ENCODE measurements at regions of chr16 and their contacts with region 1.

Region 1: DNA sequence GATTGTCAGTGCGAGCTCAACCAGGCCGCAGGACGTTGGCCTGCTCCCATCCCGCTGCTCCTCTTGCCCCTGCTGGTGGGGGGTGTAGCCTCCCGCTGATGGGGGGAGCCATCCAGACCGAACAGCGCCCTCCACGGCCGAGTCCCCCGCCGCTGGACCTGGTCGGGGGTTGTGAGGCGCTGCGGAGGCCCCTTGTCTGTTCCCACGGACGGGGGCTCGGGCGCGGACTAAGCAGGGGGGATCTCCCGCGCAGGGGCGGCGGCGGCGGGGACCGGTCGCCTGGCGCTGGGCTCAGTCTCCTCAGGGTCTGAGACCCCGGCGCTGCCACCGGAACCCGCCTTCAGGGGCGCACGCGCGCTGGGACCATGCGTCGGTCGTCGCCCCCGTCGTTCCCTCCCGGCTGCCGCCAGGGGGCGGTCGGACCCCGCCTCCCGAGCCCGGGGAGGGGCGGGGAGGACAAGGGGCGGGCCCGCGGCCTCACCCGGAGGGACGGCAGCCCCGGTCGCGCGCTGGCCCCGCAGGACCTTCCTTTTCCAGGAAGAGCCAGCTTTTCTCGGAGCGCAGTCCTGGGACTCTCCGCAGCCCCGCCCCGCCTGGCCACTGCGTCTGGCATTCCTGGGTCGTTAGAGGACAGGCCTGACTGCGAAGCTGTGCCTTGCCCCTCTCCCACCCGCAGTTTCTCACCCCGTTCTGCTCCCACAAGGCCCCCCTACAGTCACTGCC is 6.3 kb upstream of the IL32 start:
- H3K4me3 ChIP-seq: peak overlapping the region; percentile 87
- H3K27ac ChIP-seq: peak overlapping the region; percentile 77; the same call in 1 of the 2 replicates
- H3K4me1 ChIP-seq: peaks cover 3% of the 10 kb centered on the region
- CTCF ChIP-seq: peak; percentile 99

Region 2: DNA sequence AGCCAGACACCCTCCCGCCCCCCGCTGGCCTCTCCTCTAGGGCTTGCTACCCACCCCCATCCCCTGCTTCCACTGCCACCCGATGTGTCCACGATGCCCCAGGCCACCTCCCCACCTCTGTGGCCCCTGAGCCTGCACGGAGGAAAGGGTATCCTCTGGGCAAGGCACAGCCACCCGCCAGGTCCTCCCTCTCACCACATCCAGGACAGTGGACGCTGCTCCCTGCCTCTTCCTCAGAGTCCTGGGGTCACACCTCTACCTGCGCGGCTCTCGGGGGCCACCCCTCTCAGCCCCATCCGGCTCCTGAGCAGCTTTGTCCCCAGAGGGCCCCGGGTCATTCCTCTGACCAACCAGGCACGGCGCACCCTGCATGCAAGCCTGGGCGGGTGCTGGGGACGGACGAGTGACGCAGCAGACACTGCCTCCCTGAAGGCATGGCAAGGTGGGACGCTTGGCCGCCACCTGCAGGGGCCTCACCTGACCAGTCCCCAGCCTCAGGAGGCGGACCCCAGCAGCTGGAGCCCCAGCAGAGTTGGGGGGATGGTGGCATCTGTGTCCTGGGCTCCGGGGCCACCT is 122.6 kb before region 1 on chr16:
- CTCF ChIA-PET with region 1: no interaction called
- POLR2A ChIA-PET with region 1: no interaction called
- H3K4me3 ChIP-seq: no peak overlapping the region
- H3K27ac ChIP-seq: no peak overlapping the region
- H3K4me1 ChIP-seq: no peaks in the 10 kb centered on the region
- CTCF ChIP-seq: no peak

Region 3: DNA sequence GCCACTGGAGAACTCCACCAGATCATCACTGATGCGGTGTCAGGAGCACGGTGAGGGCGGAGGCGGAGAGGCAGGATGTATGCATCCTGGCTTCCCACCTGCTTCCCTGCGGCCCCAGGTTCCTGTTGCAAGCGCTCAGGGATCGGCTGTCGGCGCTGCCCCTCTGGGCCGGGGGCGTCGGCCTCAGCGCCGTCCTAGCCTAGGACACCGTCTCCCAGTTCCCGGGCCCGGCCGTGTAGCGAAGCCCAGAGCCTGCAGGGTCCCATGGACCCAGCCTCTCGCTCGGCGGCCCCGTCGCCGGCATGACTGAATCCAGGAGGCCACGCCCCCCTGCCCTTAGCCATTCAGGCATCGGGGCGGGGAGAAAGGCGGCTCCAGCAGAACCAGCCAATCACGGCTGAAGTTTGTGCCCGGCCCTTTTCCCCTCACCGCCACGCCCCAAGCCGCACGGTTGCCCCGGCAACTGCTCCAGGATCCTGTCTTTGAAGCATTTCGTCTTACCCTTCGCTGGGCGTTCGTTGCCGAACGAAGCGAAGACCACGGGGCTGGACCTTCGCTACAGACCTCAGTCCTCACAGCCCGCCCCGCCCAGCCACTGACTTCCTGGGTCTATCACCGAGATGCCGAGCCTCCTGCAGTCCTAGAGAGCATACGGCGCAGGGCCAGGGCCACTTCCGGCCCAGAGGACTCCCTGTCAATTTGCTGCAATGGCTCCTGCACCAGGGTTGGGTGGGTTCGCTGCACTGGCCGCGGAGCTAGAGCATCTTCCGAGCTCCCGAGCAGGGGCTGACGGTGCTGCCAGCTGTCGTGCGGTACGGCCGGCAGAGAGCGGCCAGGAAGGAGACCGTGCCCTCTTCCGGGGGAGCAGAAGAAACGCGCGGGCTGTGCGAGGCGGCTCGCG is 65.1 kb after region 1 on chr16:
- CTCF ChIA-PET with region 1: interaction called, 54 read pairs
- POLR2A ChIA-PET with region 1: interaction called, 17 read pairs
- H3K4me3 ChIP-seq: peak overlapping the region; percentile 73
- H3K27ac ChIP-seq: peak overlapping the region; percentile 58; the same call in 1 of the 2 replicates
- H3K4me1 ChIP-seq: no peaks in the 10 kb centered on the region; the same call in 1 of the 2 replicates
- CTCF ChIP-seq: peak; percentile 86

Measured in HEK293 (cell line).